ENCODE measurements at regions of chr14 and their contacts with region 1.

Region 1: GRCh38 chr14:32710731-32711680 is 227.7 kb upstream of the NPAS3 start:
- DNase-seq: peak; percentile 73
- ATAC-seq: peak; percentile 87
- H3K4me3 ChIP-seq: no peak overlapping the region
- H3K27ac ChIP-seq: no peak overlapping the region
- H3K4me1 ChIP-seq: peaks cover 16% of the 10 kb centered on the region
- H3K27me3 ChIP-seq: no peaks in the 10 kb centered on the region
- CTCF ChIP-seq: peak; percentile 89

Region 2: DNA sequence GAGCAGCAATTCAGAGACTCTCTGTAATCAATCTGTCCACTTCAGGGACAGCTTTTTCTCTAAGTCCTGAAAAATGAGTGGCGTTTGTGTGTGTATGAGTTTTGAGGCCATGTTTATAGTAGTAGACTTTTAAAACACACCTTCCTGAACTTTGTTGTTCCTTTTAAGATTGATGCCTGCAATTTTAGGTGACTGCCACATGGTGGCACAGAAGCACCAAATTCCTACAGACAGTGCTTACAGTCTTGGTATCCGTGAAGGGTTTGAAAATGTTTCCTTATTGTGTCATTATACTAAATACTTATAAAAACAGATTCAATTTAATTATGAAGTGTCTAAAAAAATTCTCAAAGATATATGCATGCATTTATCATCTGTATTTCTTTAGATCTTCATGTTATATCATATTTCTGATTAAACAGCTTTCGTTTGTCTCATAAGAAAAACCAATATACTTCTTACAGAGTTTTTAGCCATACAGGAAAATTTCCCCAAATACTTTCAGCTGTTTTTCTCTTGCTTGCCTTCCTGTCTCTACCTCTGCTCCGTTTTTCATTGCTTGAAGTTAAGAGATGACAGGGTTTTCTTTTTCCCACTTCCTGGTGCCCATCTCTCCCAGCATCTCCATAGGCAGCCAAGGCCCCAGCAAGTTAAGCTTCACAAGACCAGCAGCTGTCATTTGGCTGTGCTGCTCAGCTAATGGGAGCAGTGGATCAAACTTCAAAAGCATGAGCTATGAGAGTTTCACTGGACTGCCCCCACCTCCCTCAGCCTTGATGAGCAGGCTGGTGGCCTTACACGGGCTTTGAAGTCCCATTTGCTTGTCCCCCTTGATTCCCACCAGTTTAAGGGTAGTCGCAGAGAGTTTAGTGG is 122.3 kb before region 1 on chr14:
- CTCF ChIA-PET with region 1: no interaction called
- POLR2A ChIA-PET with region 1: no interaction called
- intact Hi-C with region 1: loop called (anchors 1 kb)
- DNase-seq: peak; percentile 77
- ATAC-seq: peak; percentile 83
- H3K4me3 ChIP-seq: no peak overlapping the region
- H3K27ac ChIP-seq: no peak overlapping the region
- H3K4me1 ChIP-seq: peaks cover 10% of the 10 kb centered on the region
- H3K27me3 ChIP-seq: no peaks in the 10 kb centered on the region
- CTCF ChIP-seq: peak; percentile 97

Region 3: DNA sequence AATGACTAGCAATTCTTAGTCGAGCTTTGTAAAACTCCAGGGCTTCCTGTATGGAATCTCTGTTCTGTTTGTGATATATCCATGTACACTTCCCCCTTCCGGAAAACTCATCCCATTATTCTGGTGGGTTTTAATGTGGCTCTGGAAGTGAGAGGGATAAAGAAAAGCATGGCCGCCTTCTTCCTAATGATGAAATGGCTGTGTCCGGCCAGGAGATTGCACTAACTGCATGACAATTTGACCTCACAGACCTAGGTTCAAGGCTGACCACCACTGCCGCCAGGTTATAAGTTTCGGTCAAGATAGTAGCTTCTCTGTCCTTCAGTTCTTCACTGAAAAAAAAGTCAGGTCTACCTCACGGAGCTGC is 186.7 kb after region 1 on chr14:
- CTCF ChIA-PET with region 1: no interaction called
- POLR2A ChIA-PET with region 1: no interaction called
- intact Hi-C with region 1: no loop called
- DNase-seq: peak; percentile 22
- ATAC-seq: peak; percentile 41
- H3K4me3 ChIP-seq: peak overlapping the region; percentile 80
- H3K27ac ChIP-seq: no peak overlapping the region
- H3K4me1 ChIP-seq: peaks cover 6% of the 10 kb centered on the region; the same call in 1 of the 2 replicates
- H3K27me3 ChIP-seq: no peaks in the 10 kb centered on the region
- CTCF ChIP-seq: no peak

Region 4: DNA sequence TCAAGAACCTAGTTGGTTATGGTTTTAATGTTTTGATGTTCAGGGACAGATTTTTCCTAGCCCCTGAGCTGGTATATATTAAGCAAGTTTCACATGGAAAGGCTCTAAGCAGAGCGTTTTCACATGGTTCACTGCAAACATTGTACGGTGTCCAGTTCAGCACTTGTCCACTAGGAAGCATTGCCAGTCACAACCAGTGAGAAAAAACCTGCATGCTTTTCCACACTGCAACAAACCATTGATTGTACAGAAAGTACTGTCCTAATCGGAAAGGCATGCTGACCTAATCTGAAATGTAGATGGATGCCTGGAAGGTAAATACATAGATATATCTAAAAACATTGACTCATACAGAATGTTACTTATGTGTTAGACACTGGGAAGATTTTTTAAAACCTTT is 202.7 kb after region 1 on chr14:
- CTCF ChIA-PET with region 1: no interaction called
- POLR2A ChIA-PET with region 1: no interaction called
- intact Hi-C with region 1: loop called (anchors 5 kb)
- DNase-seq: peak; percentile 89
- ATAC-seq: peak; percentile 83
- H3K4me3 ChIP-seq: no peak overlapping the region
- H3K27ac ChIP-seq: peak overlapping the region; percentile 8
- H3K4me1 ChIP-seq: peaks cover 57% of the 10 kb centered on the region
- H3K27me3 ChIP-seq: no peaks in the 10 kb centered on the region
- CTCF ChIP-seq: peak; percentile 44; the same call in 1 of the 2 replicates

Region 5: DNA sequence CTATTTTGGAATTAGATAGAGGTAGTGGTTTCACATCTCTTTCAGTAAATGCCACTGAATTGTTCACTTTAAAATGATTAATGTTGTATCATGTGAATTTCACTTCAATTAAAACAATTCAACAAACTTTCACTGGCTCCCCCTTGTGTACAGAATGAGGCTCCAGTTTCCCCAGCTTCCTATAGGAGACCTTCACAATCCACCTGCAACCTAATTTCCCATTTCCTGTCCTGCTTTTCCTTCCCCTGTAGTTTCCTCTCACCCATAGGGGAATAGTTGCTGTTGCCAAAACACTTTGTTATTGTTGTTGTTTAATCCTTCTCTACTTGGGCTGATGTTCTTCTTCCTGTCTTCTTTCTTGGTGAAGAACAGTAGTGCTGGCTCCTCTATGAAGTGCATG is 287.4 kb after region 1 on chr14:
- CTCF ChIA-PET with region 1: no interaction called
- POLR2A ChIA-PET with region 1: no interaction called
- intact Hi-C with region 1: loop called (anchors 1 kb)
- DNase-seq: peak; percentile 43
- ATAC-seq: peak; percentile 57
- H3K4me3 ChIP-seq: no peak overlapping the region
- H3K27ac ChIP-seq: no peak overlapping the region
- H3K4me1 ChIP-seq: no peaks in the 10 kb centered on the region
- H3K27me3 ChIP-seq: no peaks in the 10 kb centered on the region
- CTCF ChIP-seq: peak; percentile 61

Region 6: GRCh38 chr14:33432407-33433023 is 721.5 kb after region 1 on chr14:
- CTCF ChIA-PET with region 1: no interaction called
- POLR2A ChIA-PET with region 1: no interaction called
- intact Hi-C with region 1: loop called (anchors 5 kb)
- DNase-seq: peak; percentile 71
- ATAC-seq: peak; percentile 54
- H3K4me3 ChIP-seq: no peak overlapping the region
- H3K27ac ChIP-seq: no peak overlapping the region
- H3K4me1 ChIP-seq: peaks cover 12% of the 10 kb centered on the region
- H3K27me3 ChIP-seq: no peaks in the 10 kb centered on the region
- CTCF ChIP-seq: peak; percentile 82